Naive thymus-derived CD4-positive, alpha-beta T cell (primary cell): ENCODE measurements at regions of chr3 and their contacts with region 1.

Region 1: GRCh38 chr3:177646749-177647148 is 449.5 kb upstream of the TBL1XR1 start:
- DNase-seq: peak in 4 of 9 donors; percentile 21 to 43 (median 34)
- ATAC-seq: peak; percentile 59
- H3K4me3 ChIP-seq: no peak overlapping the region
- H3K4me3 Mint-ChIP-seq: peak overlapping the region in 9 of 10 donors; percentile 21 to 78 (median 53)
- H3K27ac ChIP-seq: no peak overlapping the region
- H3K27ac Mint-ChIP-seq: peak overlapping the region in 5 of 9 donors; percentile 16 to 70 (median 51)
- H3K4me1 ChIP-seq: peaks cover 42 to 58% of the 10 kb centered on the region in 2 donors
- H3K4me1 Mint-ChIP-seq: peaks cover 39 to 68% (median 63%) of the 10 kb centered on the region in 7 donors
- H3K27me3 ChIP-seq: no peaks in the 10 kb centered on the region
- H3K27me3 Mint-ChIP-seq: no peaks in the 10 kb centered on the region

Region 2: DNA sequence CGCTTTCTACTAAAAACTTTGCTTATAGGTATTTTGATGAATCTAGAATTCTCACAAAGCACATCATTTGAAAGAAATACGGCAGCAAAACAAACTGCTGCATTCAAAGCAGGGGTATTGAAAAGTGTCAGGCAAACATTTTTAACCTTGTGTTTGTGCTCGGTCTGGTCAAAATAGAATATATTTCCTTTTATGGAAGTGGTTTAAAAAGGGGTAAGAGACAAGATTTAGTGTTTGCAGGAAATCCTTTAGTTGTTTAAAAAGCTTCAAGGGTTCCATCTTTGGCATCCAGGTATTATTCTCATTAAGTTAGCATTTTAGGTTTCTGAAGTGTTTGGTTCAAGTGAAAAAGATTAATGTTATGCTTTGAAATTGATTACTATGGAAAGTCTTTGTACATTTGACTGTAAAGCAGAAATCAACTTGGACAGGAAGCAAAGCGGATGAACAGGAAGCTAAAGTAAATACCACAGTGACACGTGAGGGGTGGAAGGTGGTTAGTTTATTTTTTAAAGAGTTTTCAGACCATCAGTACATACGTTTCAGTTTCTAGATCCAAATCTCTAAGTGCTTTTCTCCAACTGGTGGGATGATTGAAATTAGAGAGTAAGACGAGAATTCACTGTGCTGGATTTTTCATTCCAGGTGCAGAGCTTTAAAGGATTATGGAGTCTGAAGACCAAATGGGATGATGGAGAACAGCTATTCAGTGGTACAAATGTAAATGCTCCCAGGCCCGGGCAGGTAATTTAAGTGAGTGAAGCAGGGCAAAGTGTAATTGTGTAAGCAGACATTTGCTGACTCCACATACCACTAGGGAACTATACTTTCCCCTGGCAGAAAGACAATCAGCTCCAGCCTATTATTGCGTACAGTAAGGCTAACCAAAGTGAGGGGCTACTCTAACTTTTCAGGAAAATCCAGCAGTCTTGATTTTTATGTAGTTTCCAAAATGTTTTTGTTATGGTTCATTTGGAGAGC is 107.7 kb before region 1 on chr3:
- CTCF ChIA-PET with region 1: no interaction called
- POLR2A ChIA-PET with region 1: no interaction called
- intact Hi-C with region 1: loop called in 1 of 2 experiments (anchors 5 kb)
- DNase-seq: peak in 6 of 9 donors; percentile 15 to 52 (median 40)
- ATAC-seq: peak; percentile 74
- H3K4me3 ChIP-seq: peak overlapping the region; percentile 32
- H3K4me3 Mint-ChIP-seq: peak overlapping the region; percentile 58 to 81 (median 78)
- H3K27ac ChIP-seq: no peak overlapping the region
- H3K27ac Mint-ChIP-seq: peak overlapping the region; percentile 70 to 84 (median 81)
- H3K4me1 ChIP-seq: peaks cover 32 to 36% of the 10 kb centered on the region in 2 donors
- H3K4me1 Mint-ChIP-seq: peaks cover 21 to 67% (median 47%) of the 10 kb centered on the region in 7 donors
- H3K27me3 ChIP-seq: no peaks in the 10 kb centered on the region
- H3K27me3 Mint-ChIP-seq: no peaks in the 10 kb centered on the region

Region 3: DNA sequence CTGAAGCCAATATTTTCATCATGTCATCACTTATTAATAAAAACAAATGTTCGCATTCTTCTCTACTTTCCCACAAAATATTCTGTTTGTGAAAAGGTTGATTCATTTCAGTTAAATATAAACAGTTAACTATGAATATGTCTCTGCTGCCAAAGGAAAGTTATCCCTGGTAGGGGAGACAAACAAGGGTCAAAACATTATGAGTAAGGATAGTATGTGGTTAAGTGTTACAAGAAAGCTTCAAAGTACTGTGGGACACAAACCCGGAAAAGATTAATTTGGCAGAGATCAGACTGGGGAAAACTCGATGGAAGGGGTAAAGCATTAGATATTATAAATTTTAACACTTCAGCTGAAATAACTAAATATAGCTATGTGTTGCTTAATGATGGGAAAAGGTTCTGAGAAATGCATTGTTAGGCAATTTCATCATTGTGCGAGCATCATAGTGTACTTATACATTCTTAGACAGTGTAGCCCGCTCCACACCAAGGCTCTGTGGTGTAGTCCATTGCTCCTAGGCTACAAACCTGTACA is 13.0 kb before region 1 on chr3:
- CTCF ChIA-PET with region 1: no interaction called
- POLR2A ChIA-PET with region 1: interaction called, 8 read pairs
- intact Hi-C with region 1: loop called in 1 of 2 experiments (anchors 2 kb)
- DNase-seq: no peak
- ATAC-seq: no peak
- H3K4me3 ChIP-seq: no peak overlapping the region
- H3K4me3 Mint-ChIP-seq: no peak overlapping the region
- H3K27ac ChIP-seq: no peak overlapping the region
- H3K27ac Mint-ChIP-seq: no peak overlapping the region
- H3K4me1 ChIP-seq: no peaks in the 10 kb centered on the region
- H3K4me1 Mint-ChIP-seq: peaks cover 0 to 9% (median 0%) of the 10 kb centered on the region in 7 donors
- H3K27me3 ChIP-seq: no peaks in the 10 kb centered on the region
- H3K27me3 Mint-ChIP-seq: peaks cover 0 to 4% (median 0%) of the 10 kb centered on the region in 5 donors

Region 4: GRCh38 chr3:178182337-178182779 is 535.6 kb after region 1 on chr3:
- CTCF ChIA-PET with region 1: no interaction called
- POLR2A ChIA-PET with region 1: no interaction called
- intact Hi-C with region 1: no loop called
- DNase-seq: no peak
- ATAC-seq: no peak
- H3K4me3 ChIP-seq: no peak overlapping the region
- H3K4me3 Mint-ChIP-seq: no peak overlapping the region
- H3K27ac ChIP-seq: no peak overlapping the region
- H3K27ac Mint-ChIP-seq: no peak overlapping the region
- H3K4me1 ChIP-seq: no peaks in the 10 kb centered on the region
- H3K4me1 Mint-ChIP-seq: peaks cover 0 to 1% (median 0%) of the 10 kb centered on the region in 7 donors
- H3K27me3 ChIP-seq: no peaks in the 10 kb centered on the region
- H3K27me3 Mint-ChIP-seq: no peaks in the 10 kb centered on the region